K562 (cell line): ENCODE measurements at regions of chr19 and their contacts with region 1.

Region 1: GRCh38 chr19:33416307-33417215 is 43.1 kb downstream of the CEBPG start:
- DNase-seq: peak; percentile 81 to 88 (median 86)
- ATAC-seq: peak; percentile 96
- H3K4me3 ChIP-seq: no peak overlapping the region
- H3K27ac ChIP-seq: no peak overlapping the region
- H3K4me1 ChIP-seq: peaks cover 0 to 14% of the 10 kb centered on the region in 2 experiments; a peak in 2 of 5 replicates
- H3K27me3 ChIP-seq: peaks cover 0 to 29% of the 10 kb centered on the region in 2 experiments; a peak in 2 of 5 replicates
- CTCF ChIP-seq: peak; percentile 77 to 88 (median 87)
- EP300 ChIP-seq: no peak
- POLR2A ChIP-seq: no peak
- RAD21 ChIP-seq: peak; percentile 30 to 79

Region 2: GRCh38 chr19:33630880-33631608 is 214.5 kb after region 1 on chr19:
- CTCF ChIA-PET with region 1: interaction called, 13 read pairs
- POLR2A ChIA-PET with region 1: interaction called, 3 read pairs
- in situ Hi-C with region 1: no loop called
- intact Hi-C with region 1: no loop called
- DNase-seq: no peak
- ATAC-seq: peak; percentile 58
- H3K4me3 ChIP-seq: no peak overlapping the region
- H3K27ac ChIP-seq: no peak overlapping the region
- H3K4me1 ChIP-seq: no peaks in the 10 kb centered on the region
- H3K27me3 ChIP-seq: peaks cover under 1 to 38% of the 10 kb centered on the region in 2 experiments; a peak in 2 of 5 replicates
- CTCF ChIP-seq: no peak
- EP300 ChIP-seq: no peak
- POLR2A ChIP-seq: no peak
- RAD21 ChIP-seq: no peak